ENCODE measurements at regions of chr7 and their contacts with region 1.

Region 1: DNA sequence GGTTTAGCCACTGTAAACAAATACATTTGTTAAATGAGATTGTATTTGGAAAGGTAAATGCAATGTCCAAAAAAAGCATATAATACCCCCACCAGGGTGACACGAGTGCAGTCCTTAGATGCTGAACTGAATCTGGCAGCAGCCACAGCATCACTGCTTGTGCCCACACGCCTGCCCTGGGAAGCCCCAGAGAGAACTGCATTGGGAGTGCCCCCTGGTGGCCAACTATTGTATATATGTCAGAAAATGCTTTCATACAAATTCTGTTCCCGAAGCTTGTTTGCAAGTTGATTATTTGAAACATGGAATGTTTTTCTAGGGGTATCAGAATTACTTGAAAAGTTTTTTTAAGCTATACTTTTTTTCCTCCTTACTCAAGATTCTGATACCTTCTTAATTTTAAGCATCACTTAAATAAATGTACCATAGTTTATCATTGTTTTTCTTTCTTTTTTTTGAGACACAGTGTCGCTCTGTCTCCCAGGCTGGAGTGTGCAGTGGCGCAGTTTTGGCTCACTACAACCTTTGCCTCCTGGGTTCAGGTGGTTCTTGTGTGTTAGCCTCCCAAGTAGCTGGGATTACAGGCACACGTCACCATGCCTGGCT is 50.1 kb downstream of the LANCL2 start:
- DNase-seq: peak; percentile 64 to 80 (median 73)
- ATAC-seq: peak; percentile 99
- H3K4me3 ChIP-seq: no peak overlapping the region
- H3K4me3 Mint-ChIP-seq: no peak overlapping the region
- H3K27ac ChIP-seq: no peak overlapping the region
- H3K27ac Mint-ChIP-seq: peak overlapping the region in 3 of 9 donors; percentile 2 to 39 (median 32)
- H3K4me1 ChIP-seq: no peaks in the 10 kb centered on the region
- H3K4me1 Mint-ChIP-seq: peaks cover 0 to 5% (median 2%) of the 10 kb centered on the region in 7 donors
- H3K27me3 ChIP-seq: no peaks in the 10 kb centered on the region
- H3K27me3 Mint-ChIP-seq: no peaks in the 10 kb centered on the region

Region 2: DNA sequence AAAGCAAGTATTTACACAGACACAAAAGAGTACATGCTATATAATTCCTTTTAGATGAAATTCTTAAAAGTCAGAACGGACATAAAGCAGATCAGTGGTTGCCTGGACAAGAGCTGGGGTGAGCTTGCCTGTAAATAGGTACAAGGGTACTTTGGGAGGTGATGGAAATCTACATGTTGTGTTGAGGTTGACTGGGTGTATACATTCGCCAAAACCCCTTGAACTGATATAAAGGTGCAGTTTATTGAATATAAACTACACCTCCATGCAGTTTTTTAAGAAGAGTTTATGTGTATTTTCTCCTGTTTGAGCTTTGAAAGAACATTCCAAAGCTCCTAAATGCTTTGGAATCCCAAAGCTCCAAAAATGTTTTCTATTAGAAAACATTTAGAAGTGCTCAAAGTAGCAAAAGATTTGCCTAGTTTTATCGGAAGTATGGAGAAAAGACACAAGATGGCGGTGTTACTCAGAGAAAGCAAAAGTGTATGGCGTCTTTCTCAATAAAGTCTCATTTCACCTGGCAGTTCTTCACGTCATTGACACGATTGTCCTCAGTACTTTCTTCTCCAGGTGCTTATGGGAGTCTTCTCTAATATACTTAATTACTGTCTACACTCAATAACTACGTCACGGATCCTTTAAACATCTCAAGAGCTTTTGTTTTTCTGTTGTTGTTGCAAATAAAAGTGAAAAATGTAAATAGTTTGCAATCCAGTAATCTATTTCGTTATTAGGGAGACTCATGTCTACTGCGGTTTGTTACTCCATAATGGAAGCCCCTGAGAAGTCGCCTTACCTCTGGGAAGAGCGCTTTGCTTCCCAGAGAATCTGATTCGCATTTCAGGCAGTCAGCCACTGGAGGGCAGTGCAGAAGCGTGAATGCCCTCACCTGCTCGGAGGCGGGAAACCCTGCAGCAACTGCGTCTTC is 641.5 kb before region 1 on chr7:
- CTCF ChIA-PET with region 1: interaction called, 4 read pairs
- POLR2A ChIA-PET with region 1: no interaction called
- intact Hi-C with region 1: loop called (anchors 1 kb)
- DNase-seq: peak; percentile 18 to 67 (median 49)
- ATAC-seq: peak; percentile 94
- H3K4me3 ChIP-seq: peak overlapping the region; percentile 50
- H3K4me3 Mint-ChIP-seq: peak overlapping the region; percentile 60 to 86 (median 79)
- H3K27ac ChIP-seq: no peak overlapping the region
- H3K27ac Mint-ChIP-seq: peak overlapping the region in 7 of 9 donors; percentile 22 to 79 (median 66)
- H3K4me1 ChIP-seq: no peaks in the 10 kb centered on the region
- H3K4me1 Mint-ChIP-seq: peaks cover 0 to 11% (median 4%) of the 10 kb centered on the region in 7 donors
- H3K27me3 ChIP-seq: no peaks in the 10 kb centered on the region
- H3K27me3 Mint-ChIP-seq: peaks cover 8 to 36% (median 35%) of the 10 kb centered on the region in 5 donors

Region 3: DNA sequence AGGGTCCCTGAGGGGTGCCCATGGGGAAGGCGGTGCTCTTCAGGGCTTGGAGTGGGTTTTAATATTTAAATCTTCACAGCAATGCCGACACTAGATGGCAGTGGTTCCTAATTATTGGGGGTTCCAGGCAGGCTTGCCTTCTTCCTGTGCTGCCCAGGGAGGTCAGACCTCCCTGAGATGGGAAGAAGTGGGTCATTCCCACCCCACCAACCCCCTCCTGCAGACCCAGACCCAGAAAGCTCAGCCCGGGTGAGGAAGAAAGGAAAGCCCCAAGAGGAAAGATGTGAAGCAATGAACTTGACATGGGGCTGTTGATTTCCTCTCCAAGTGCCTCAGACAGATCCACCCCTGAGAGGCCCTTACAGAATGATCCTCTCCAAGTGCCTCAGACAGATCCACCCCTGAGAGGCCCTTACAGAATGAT is 135.2 kb before region 1 on chr7:
- CTCF ChIA-PET with region 1: interaction called, 21 read pairs
- POLR2A ChIA-PET with region 1: no interaction called
- intact Hi-C with region 1: loop called (anchors 1 kb)
- DNase-seq: peak in 8 of 9 donors; percentile 15 to 59 (median 44)
- ATAC-seq: peak; percentile 73
- H3K4me3 ChIP-seq: no peak overlapping the region
- H3K4me3 Mint-ChIP-seq: no peak overlapping the region
- H3K27ac ChIP-seq: no peak overlapping the region
- H3K27ac Mint-ChIP-seq: peak overlapping the region in 1 of 9 donors; percentile 52
- H3K4me1 ChIP-seq: no peaks in the 10 kb centered on the region
- H3K4me1 Mint-ChIP-seq: peaks cover 0 to 2% (median 0%) of the 10 kb centered on the region in 7 donors
- H3K27me3 ChIP-seq: no peaks in the 10 kb centered on the region
- H3K27me3 Mint-ChIP-seq: peaks cover 5 to 12% (median 8%) of the 10 kb centered on the region in 5 donors

Region 4: GRCh38 chr7:55387062-55387965 is 28.0 kb before region 1 on chr7:
- CTCF ChIA-PET with region 1: no interaction called
- POLR2A ChIA-PET with region 1: no interaction called
- intact Hi-C with region 1: no loop called
- DNase-seq: no peak
- ATAC-seq: no peak
- H3K4me3 ChIP-seq: no peak overlapping the region
- H3K4me3 Mint-ChIP-seq: no peak overlapping the region
- H3K27ac ChIP-seq: no peak overlapping the region
- H3K27ac Mint-ChIP-seq: no peak overlapping the region
- H3K4me1 ChIP-seq: no peaks in the 10 kb centered on the region
- H3K4me1 Mint-ChIP-seq: peaks cover 0 to 7% (median 0%) of the 10 kb centered on the region in 7 donors
- H3K27me3 ChIP-seq: no peaks in the 10 kb centered on the region
- H3K27me3 Mint-ChIP-seq: no peaks in the 10 kb centered on the region

Measured in naive thymus-derived CD4-positive, alpha-beta T cell (primary cell).